ENCODE measurements at regions of chr6 and their contacts with region 1.

Region 1: DNA sequence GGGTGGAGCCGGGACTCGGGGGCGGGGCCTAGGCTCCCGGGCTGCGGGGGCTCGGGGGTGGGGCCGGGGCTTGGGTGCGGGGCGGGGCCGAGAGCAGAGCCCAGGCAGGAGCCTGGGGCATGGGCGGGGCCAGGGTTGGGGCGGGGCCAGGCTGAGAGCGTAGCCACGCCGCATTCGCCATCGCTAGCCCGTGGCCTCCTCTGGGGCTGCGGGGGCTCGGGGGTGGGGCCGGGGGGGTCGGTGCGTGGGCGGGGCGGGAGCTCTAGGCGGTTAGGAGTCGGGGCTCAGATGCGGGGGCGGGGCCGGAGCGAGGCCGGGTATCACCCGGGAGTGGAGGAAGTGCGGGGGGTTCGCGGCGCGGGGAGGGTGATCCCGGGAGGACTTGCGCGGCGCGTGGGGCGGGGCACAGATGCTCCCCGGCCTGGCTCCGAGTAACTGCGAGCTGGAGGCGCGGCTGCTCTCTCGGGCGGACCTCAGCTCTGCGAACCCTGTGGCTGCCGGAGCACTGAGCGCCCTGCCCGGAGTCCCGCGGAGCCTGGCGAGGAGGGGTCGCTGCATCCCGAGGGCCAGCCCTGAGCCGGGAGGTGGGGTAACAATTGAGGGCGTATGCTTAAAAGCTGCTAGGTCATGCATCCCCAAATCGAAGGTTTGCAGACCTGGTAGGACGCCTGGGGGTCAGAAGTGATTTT is 434 bp upstream of the ECI2 start:
- H3K4me3 Mint-ChIP-seq: peak overlapping the region; percentile 85
- H3K27ac Mint-ChIP-seq: peak overlapping the region; percentile 93
- H3K4me1 Mint-ChIP-seq: peaks cover 22% of the 10 kb centered on the region
- H3K27me3 Mint-ChIP-seq: peaks cover 4% of the 10 kb centered on the region

Region 2: GRCh38 chr6:4021133-4021853 is 114.5 kb before region 1 on chr6:
- intact Hi-C with region 1: loop called (anchors 1 kb)
- H3K4me3 Mint-ChIP-seq: peak overlapping the region; percentile 97
- H3K27ac Mint-ChIP-seq: peak overlapping the region; percentile 97
- H3K4me1 Mint-ChIP-seq: peaks cover 38% of the 10 kb centered on the region
- H3K27me3 Mint-ChIP-seq: no peaks in the 10 kb centered on the region

Region 3: GRCh38 chr6:4185419-4185818 is 49.6 kb after region 1 on chr6:
- intact Hi-C with region 1: no loop called
- H3K4me3 Mint-ChIP-seq: no peak overlapping the region
- H3K27ac Mint-ChIP-seq: no peak overlapping the region
- H3K4me1 Mint-ChIP-seq: no peaks in the 10 kb centered on the region
- H3K27me3 Mint-ChIP-seq: peaks cover 9% of the 10 kb centered on the region

Region 4: GRCh38 chr6:4775584-4776494 is 640.0 kb after region 1 on chr6 and contains the start of gene CDYL:
- intact Hi-C with region 1: loop called (anchors 5 kb)
- H3K4me3 Mint-ChIP-seq: peak within 1 kb of the TSS; percentile 84
- H3K27ac Mint-ChIP-seq: peak within 1 kb of the TSS; percentile 74
- H3K4me1 Mint-ChIP-seq: peaks cover 48% of the 10 kb centered on the region
- H3K27me3 Mint-ChIP-seq: peaks cover 24% of the 10 kb centered on the region

Measured in dendritic cell treated with granulocyte-macrophage colony-stimulating factor and Interleukin-4, amounts not matched to agents 40 ng/mL and 50 ng/mL, for 4 days (primary cell).